ENCODE measurements at regions of chr17 and their contacts with region 1.

Region 1: GRCh38 chr17:70767102-70767701 is 597.9 kb downstream of the KCNJ2 start:
- H3K4me3 ChIP-seq: no peak overlapping the region
- H3K27ac ChIP-seq: no peak overlapping the region
- H3K4me1 ChIP-seq: no peaks in the 10 kb centered on the region
- CTCF ChIP-seq: 0 out of 2 replicates have a peak, but pooled peaks have one; percentile 23

Region 2: DNA sequence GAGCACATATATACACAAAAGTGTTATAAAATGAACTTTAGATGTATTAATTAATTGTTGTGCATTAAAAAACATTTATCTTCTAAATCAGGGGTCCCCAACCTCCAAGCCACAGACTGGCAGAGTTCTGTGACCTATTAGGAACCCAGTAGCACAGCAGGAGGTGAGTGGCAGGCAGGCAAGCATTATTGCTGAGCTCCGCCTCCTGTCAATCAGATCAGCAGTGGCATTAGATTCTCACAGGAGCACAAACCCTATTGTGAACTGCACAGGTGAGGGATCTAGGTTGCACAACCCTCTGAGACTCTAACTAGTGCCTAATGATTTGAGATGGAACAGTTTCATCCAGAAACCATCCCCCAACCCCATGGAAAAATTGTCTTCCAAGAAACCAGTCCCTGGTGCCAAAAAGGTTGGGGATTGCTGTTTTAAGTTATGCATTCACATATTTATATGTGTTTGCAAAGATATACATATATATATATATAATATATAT is 14.2 kb before region 1 on chr17:
- CTCF ChIA-PET with region 1: interaction called, 30 read pairs
- POLR2A ChIA-PET with region 1: no interaction called
- H3K4me3 ChIP-seq: no peak overlapping the region
- H3K27ac ChIP-seq: no peak overlapping the region
- H3K4me1 ChIP-seq: peaks cover 1% of the 10 kb centered on the region
- CTCF ChIP-seq: no peak

Region 3: GRCh38 chr17:70786081-70786480 is 18.9 kb after region 1 on chr17:
- CTCF ChIA-PET with region 1: interaction called, 24 read pairs
- POLR2A ChIA-PET with region 1: no interaction called
- H3K4me3 ChIP-seq: no peak overlapping the region
- H3K27ac ChIP-seq: no peak overlapping the region
- H3K4me1 ChIP-seq: no peaks in the 10 kb centered on the region
- CTCF ChIP-seq: no peak

Region 4: DNA sequence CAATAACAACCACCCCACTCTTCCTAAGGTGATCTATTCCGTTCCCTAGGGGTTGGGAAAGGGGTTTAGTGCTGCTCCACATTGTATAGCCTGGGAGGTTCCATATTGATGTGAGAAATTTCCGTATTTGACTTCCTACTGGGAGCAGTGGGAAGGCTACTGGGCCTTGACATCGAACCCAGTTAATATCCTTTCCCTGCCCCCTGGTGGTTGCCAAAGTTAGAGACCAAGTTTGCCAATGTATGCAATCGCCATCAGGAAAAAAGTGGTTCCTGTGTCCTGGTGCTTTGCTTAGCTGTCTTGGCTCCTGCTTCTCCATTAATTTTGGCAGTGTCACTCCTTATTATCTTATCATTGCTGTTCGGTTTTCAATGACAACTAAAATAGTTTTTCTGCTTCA is 317.0 kb after region 1 on chr17:
- CTCF ChIA-PET with region 1: interaction called, 24 read pairs
- POLR2A ChIA-PET with region 1: no interaction called
- H3K4me3 ChIP-seq: no peak overlapping the region
- H3K27ac ChIP-seq: no peak overlapping the region
- H3K4me1 ChIP-seq: no peaks in the 10 kb centered on the region
- CTCF ChIP-seq: no peak

Region 5: GRCh38 chr17:72110231-72110944 is 1343.2 kb after region 1 on chr17:
- CTCF ChIA-PET with region 1: interaction called, 11 read pairs
- POLR2A ChIA-PET with region 1: no interaction called
- H3K4me3 ChIP-seq: no peak overlapping the region
- H3K27ac ChIP-seq: no peak overlapping the region
- H3K4me1 ChIP-seq: peaks cover 9% of the 10 kb centered on the region
- CTCF ChIP-seq: no peak

Region 6: DNA sequence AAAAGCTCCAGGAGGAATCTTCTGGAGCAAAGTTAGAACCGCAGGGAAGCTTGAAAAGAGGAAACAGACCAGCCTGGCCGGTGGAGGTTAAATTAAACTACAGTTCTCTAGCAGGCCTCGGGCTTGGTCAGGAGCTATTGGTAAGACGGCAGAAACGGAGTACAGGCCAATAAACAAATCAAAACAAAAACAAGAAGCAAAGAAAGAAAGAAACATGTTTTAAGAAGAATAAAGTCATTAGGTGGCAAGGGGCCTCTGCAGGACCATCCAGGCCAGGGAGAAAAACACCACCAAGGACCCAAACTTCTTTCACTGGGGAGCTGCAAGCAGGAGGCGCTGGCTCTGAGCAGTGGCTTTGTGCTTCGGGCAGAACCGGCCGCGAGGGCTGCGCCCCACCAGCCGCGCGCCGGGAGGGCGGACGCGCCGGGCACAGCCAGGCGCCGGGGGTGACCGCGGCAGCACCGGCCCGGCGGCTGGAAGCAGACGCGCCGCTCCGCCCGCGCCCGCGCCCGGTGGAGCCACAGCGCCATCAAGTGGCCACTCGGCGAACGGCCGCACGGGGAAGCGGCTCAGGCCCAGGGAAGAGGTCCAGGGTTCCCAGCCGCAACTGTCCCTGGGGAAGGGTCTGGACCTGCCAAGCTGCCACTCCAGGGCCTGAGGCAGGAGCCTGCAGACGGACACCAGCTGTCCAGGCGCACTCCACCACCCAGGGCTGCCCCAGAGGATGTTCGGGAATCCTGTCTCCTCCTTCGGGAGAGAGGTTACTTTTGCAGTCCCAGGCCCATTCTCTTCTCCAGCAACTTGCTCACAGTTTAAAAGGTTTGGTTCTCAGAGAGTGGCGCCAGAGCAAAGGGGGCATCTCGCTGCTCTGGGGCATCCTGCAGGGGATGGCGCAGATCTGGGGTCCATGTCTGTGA is 1773.0 kb after region 1 on chr17:
- CTCF ChIA-PET with region 1: interaction called, 33 read pairs
- POLR2A ChIA-PET with region 1: no interaction called
- H3K4me3 ChIP-seq: no peak overlapping the region
- H3K27ac ChIP-seq: peak overlapping the region; percentile 50; the same call in 1 of the 2 replicates
- H3K4me1 ChIP-seq: peaks cover 4% of the 10 kb centered on the region
- CTCF ChIP-seq: peak; percentile 88